Activated CD8-positive, alpha-beta T cell treated with anti-CD3 and anti-CD28 coated beads, Interleukin-2, amount 10 ng/mL, durations not matched to agents 7 days and 5 days (primary cell): ENCODE measurements at regions of chr2 and their contacts with region 1.

Region 1: GRCh38 chr2:119641562-119642258 is 37.3 kb upstream of the TMEM177 start:
- DNase-seq: peak; percentile 79
- ATAC-seq: peak; percentile 97
- H3K4me3 Mint-ChIP-seq: no peak overlapping the region
- H3K27ac Mint-ChIP-seq: no peak overlapping the region
- H3K4me1 Mint-ChIP-seq: peaks cover 2% of the 10 kb centered on the region
- H3K27me3 Mint-ChIP-seq: peaks cover 3% of the 10 kb centered on the region

Region 2: GRCh38 chr2:119630121-119630520 is 11.6 kb before region 1 on chr2:
- CTCF ChIA-PET with region 1: interaction called, 10 read pairs
- POLR2A ChIA-PET with region 1: no interaction called
- DNase-seq: no peak
- ATAC-seq: no peak
- H3K4me3 Mint-ChIP-seq: no peak overlapping the region
- H3K27ac Mint-ChIP-seq: no peak overlapping the region
- H3K4me1 Mint-ChIP-seq: no peaks in the 10 kb centered on the region
- H3K27me3 Mint-ChIP-seq: peaks cover 16% of the 10 kb centered on the region

Region 3: GRCh38 chr2:119657466-119658145 is 15.9 kb after region 1 on chr2:
- CTCF ChIA-PET with region 1: interaction called, 24 read pairs
- POLR2A ChIA-PET with region 1: no interaction called
- DNase-seq: no peak
- ATAC-seq: no peak
- H3K4me3 Mint-ChIP-seq: no peak overlapping the region
- H3K27ac Mint-ChIP-seq: no peak overlapping the region
- H3K4me1 Mint-ChIP-seq: no peaks in the 10 kb centered on the region
- H3K27me3 Mint-ChIP-seq: peaks cover 7% of the 10 kb centered on the region

Region 4: GRCh38 chr2:119782308-119783027 is 140.8 kb after region 1 on chr2:
- CTCF ChIA-PET with region 1: no interaction called
- POLR2A ChIA-PET with region 1: no interaction called
- DNase-seq: no peak
- ATAC-seq: no peak
- H3K4me3 Mint-ChIP-seq: no peak overlapping the region
- H3K27ac Mint-ChIP-seq: no peak overlapping the region
- H3K4me1 Mint-ChIP-seq: no peaks in the 10 kb centered on the region
- H3K27me3 Mint-ChIP-seq: no peaks in the 10 kb centered on the region